ENCODE measurements at regions of chr6 and their contacts with region 1.

Region 1: GRCh38 chr6:7243179-7243981 is 69.6 kb downstream of the SSR1 start:
- DNase-seq: no peak
- H3K4me3 ChIP-seq: no peak overlapping the region
- H3K27ac ChIP-seq: peak overlapping the region; percentile 53 to 80 (median 70)
- H3K4me1 ChIP-seq: peaks cover 0 to 50% (median 20%) of the 10 kb centered on the region in 3 donors
- H3K27me3 ChIP-seq: no peaks in the 10 kb centered on the region
- CTCF ChIP-seq: peak; percentile 76 to 90 (median 88)
- POLR2A ChIP-seq: no peak

Region 2: GRCh38 chr6:6686748-6687601 is 556.4 kb before region 1 on chr6:
- intact Hi-C with region 1: loop called (anchors 10 kb)
- DNase-seq: peak; percentile 45
- H3K4me3 ChIP-seq: peak overlapping the region; percentile 24 to 51 (median 36)
- H3K27ac ChIP-seq: peak overlapping the region; percentile 77 to 88 (median 88)
- H3K4me1 ChIP-seq: peaks cover 36 to 62% (median 53%) of the 10 kb centered on the region in 3 donors
- H3K27me3 ChIP-seq: no peaks in the 10 kb centered on the region
- CTCF ChIP-seq: no peak
- POLR2A ChIP-seq: peak in 1 of 4 donors; percentile 54

Measured in esophagus squamous epithelium (tissue), 5 donors.